ENCODE measurements at regions of chr1 and their contacts with region 1.

Region 1: DNA sequence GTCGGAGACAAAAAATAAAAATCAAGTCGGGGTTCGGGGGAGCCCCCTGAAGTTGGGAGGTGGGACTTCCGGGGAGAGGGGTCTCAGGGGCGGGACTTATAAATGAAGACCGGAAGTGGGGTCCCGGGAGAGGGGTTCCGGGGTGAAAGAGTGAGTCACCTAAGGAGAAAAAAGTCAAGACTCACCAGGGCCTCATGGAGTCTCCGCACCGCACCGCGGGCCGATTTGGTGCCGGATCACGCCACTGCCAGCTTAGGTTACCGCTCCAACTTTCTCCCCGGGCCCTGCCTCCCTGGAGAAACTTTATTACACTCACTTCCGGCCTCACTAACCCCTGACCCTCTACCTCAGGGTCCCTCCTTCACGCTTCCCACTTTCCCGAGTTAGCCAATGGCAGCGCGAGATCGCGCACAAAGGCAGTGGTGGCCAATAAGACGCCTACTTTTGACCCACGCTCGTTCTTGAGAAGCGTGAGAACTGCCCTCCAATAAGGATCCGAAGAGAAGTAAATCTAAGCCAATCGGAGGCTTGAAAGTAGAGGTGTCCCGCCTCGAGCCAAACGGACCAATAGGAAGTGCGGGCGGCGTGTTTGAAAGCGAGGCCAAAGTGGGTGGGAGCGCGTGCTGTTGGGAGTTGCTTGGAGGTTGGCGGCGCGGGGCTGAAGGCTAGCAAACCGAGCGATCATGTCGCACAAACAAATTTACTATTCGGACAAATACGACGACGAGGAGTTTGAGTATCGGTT is at the start of gene CKS1B:
- DNase-seq: peak; percentile 100
- ATAC-seq: peak; percentile 78
- H3K4me3 ChIP-seq: peak within 1 kb of the TSS; percentile 61 to 70
- H3K27ac ChIP-seq: peak within 1 kb of the TSS; percentile 86
- H3K4me1 ChIP-seq: peaks cover 40 to 64% of the 10 kb centered on the region in 2 experiments
- H3K27me3 ChIP-seq: no peaks in the 10 kb centered on the region
- CTCF ChIP-seq: no peak
- POLR2A ChIP-seq: no peak
- RAD21 ChIP-seq: no peak
- total RNA-seq, gene CKS1B: 229 TPM

Region 2: GRCh38 chr1:154955718-154956543 is 18.3 kb before region 1 on chr1 and contains the start of gene PBXIP1:
- CTCF ChIA-PET with region 1: interaction called, 15 read pairs
- POLR2A ChIA-PET with region 1: interaction called, 38 read pairs
- RAD21 ChIA-PET with region 1: no interaction called
- intact Hi-C with region 1: no loop called
- DNase-seq: peak; percentile 80
- ATAC-seq: peak; percentile 88
- H3K4me3 ChIP-seq: peak within 1 kb of the TSS; percentile 60 to 62
- H3K27ac ChIP-seq: peak within 1 kb of the TSS; percentile 5; the same call in 1 of the 2 replicates
- H3K4me1 ChIP-seq: peaks cover 18 to 40% of the 10 kb centered on the region in 2 experiments
- H3K27me3 ChIP-seq: no peaks in the 10 kb centered on the region
- CTCF ChIP-seq: peak in 2 of 3 experiments; percentile 2 to 30; a peak in 2 of 6 replicates
- POLR2A ChIP-seq: peak; percentile 30
- RAD21 ChIP-seq: peak; percentile 44
- total RNA-seq, gene PBXIP1: 12.6 TPM

Region 3: DNA sequence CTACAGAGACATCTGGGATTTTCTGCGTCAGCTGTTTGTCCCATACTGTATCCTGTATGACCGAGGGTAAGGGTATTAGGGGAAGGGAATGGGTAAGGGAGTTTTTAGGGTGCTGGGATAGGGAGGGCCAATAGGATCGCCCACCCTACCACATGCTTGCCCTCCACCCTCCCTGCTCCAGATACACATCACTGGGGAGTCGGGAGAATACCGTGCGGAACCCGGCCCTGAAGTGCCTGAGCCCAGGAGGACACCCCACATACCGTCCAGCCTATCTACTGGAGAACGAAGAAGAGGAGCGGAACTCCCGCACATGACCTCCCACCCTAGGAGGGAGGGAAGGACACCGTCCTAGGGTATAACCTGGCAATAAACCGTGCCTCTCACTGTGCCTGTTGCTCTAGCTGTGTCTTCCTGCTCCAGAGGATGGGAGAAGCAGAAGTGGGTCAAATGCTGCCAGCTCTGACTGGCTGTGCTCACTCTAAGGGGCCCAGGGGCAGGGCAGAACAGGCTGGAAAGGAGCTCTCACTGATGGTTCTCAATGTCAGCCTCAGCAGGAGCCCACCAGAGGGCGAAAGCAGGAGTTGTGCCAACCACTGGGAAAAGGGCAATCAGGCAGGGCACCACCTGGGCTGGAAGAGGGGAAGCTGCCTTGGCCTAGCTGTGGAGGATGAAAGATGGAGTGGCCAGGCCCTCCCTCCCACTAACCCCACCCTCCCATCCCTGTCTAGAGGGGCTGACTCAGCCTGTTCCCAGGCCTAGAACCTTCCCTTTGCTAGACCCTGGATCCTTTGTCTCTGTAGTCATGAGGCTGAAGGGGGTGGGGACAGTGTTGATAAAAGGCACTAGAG is 18.7 kb after region 1 on chr1:
- CTCF ChIA-PET with region 1: interaction called, 5 read pairs
- POLR2A ChIA-PET with region 1: interaction called, 18 read pairs
- RAD21 ChIA-PET with region 1: no interaction called
- intact Hi-C with region 1: no loop called
- DNase-seq: no peak
- ATAC-seq: peak; percentile 65
- H3K4me3 ChIP-seq: no peak overlapping the region
- H3K27ac ChIP-seq: peak overlapping the region; percentile 29; the same call in 1 of the 2 replicates
- H3K4me1 ChIP-seq: peaks cover 20 to 43% of the 10 kb centered on the region in 2 experiments
- H3K27me3 ChIP-seq: no peaks in the 10 kb centered on the region
- CTCF ChIP-seq: peak in 2 of 3 experiments; percentile 34 to 40; a peak in 3 of 6 replicates
- POLR2A ChIP-seq: no peak
- RAD21 ChIP-seq: no peak

Region 4: GRCh38 chr1:155017041-155017945 is 43.1 kb after region 1 on chr1:
- CTCF ChIA-PET with region 1: interaction called, 7 read pairs
- POLR2A ChIA-PET with region 1: interaction called, 8 read pairs
- RAD21 ChIA-PET with region 1: interaction called in 1 of 2 experiments, 3 read pairs
- intact Hi-C with region 1: loop called (anchors 1 kb)
- DNase-seq: peak; percentile 87
- ATAC-seq: peak; percentile 86
- H3K4me3 ChIP-seq: peak overlapping the region; percentile 27 to 47
- H3K27ac ChIP-seq: peak overlapping the region; percentile 89
- H3K4me1 ChIP-seq: peaks cover 30 to 62% of the 10 kb centered on the region in 2 experiments
- H3K27me3 ChIP-seq: no peaks in the 10 kb centered on the region
- CTCF ChIP-seq: peak; percentile 99 to 100 (median 100)
- POLR2A ChIP-seq: no peak
- RAD21 ChIP-seq: peak; percentile 86

Region 5: DNA sequence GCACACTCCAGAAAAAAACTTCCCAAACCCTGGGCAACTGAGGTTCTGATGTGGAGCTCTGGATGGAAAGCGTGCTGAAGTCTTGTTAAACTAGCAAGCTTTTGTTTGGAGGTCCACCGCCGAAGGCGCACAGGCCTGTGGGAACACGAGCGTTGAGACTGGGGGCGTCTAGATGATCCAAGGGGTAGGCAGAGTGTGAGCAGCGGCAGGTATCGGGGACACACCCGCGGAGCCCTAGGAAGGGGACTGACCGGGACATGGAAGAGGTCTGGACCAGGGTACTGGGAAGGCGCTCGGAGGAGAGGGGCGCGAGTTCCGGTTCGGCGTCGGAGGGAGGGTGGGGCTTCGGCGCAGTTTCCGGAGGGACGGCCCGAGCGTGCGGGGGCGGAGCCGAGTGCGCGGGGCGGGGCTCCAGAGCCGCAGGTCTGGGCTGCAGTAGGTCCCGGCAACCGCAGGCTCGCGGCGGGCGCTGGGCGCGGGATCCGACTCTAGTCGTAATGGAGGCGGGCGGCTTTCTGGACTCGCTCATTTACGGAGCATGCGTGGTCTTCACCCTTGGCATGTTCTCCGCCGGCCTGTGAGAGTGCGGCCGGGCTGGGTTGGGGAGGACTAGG is 161.3 kb after region 1 on chr1 and contains the start of gene SLC50A1:
- CTCF ChIA-PET with region 1: no interaction called
- POLR2A ChIA-PET with region 1: no interaction called
- RAD21 ChIA-PET with region 1: no interaction called
- intact Hi-C with region 1: loop called (anchors 5 kb)
- DNase-seq: peak; percentile 82
- ATAC-seq: peak; percentile 80
- H3K4me3 ChIP-seq: peak within 1 kb of the TSS; percentile 77 to 88
- H3K27ac ChIP-seq: peak within 1 kb of the TSS; percentile 95
- H3K4me1 ChIP-seq: peaks cover 36 to 66% of the 10 kb centered on the region in 2 experiments
- H3K27me3 ChIP-seq: no peaks in the 10 kb centered on the region
- CTCF ChIP-seq: 0 out of 6 replicates have a peak, but pooled peaks of 1 of the 3 experiments have one; percentile 13
- POLR2A ChIP-seq: peak; percentile 77
- RAD21 ChIP-seq: no peak
- total RNA-seq, gene SLC50A1: 49.9 TPM

Measured in HCT116 (cell line).